Activated CD4-positive, alpha-beta memory T cell treated with anti-CD3 and anti-CD28 coated beads, Interleukin-2, amount 10 ng/mL, durations not matched to agents 7 days and 5 days (primary cell): ENCODE measurements at regions of chr12 and their contacts with region 1.

Region 1: GRCh38 chr12:56688129-56688845 is at the start of gene PTGES3:
- DNase-seq: peak; percentile 99
- H3K4me3 Mint-ChIP-seq: peak within 1 kb of the TSS; percentile 100
- H3K27ac Mint-ChIP-seq: peak within 1 kb of the TSS; percentile 100
- H3K4me1 Mint-ChIP-seq: peaks cover 22% of the 10 kb centered on the region
- H3K27me3 Mint-ChIP-seq: no peaks in the 10 kb centered on the region
- total RNA-seq, gene PTGES3: 240 to 241 TPM

Region 2: GRCh38 chr12:56630160-56630632 is 58.1 kb before region 1 on chr12 and contains the start of gene BAZ2A:
- CTCF ChIA-PET with region 1: interaction called, 65 read pairs
- POLR2A ChIA-PET with region 1: interaction called, 71 read pairs
- DNase-seq: peak; percentile 91
- H3K4me3 Mint-ChIP-seq: peak within 1 kb of the TSS; percentile 92
- H3K27ac Mint-ChIP-seq: peak within 1 kb of the TSS; percentile 86
- H3K4me1 Mint-ChIP-seq: peaks cover 69% of the 10 kb centered on the region
- H3K27me3 Mint-ChIP-seq: no peaks in the 10 kb centered on the region
- total RNA-seq, gene BAZ2A: 121 to 126 TPM

Region 3: DNA sequence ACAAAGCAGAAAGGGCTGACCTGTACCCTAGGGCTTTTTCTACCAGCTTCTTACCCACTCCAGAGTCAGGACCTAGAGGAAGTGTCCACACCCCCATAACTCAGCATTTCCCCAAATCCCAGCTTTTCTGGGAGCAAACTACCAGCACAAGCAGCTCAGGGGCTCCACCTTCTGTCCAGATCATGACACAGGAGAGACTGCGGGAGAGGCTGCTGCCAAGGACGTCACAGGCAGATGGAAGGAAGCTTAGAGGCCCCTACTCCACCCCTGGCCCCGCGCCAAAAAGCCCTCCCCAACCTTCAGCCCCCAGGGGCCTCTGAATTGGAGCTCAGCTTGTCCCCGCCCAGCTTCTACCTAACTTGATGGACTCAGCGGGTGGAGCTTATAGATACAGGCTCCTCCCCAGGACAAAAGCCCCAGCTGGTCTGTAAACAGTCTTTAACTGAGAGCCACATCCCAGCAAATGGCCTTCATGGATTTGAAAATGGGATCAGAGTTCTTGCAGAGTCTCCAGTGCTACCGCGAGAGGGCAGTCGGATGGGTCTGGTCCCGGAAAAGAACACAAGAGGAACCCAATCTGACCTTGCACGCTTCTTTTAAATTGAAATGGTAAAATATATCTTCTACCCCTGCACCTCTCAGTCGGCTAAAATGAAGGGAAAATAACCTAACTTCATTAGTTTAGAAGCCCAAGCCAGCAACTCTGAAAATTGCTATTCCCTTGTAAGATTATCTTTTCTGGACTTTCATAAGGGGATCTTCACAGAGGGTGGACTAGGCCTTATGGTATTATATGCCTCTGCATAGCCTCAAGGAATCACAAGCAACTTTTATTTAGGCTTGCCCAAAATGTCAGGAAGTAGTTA is 51.4 kb before region 1 on chr12:
- CTCF ChIA-PET with region 1: interaction called, 65 read pairs
- POLR2A ChIA-PET with region 1: interaction called, 65 read pairs
- DNase-seq: peak; percentile 92
- H3K4me3 Mint-ChIP-seq: peak overlapping the region; percentile 96
- H3K27ac Mint-ChIP-seq: peak overlapping the region; percentile 80
- H3K4me1 Mint-ChIP-seq: peaks cover 59% of the 10 kb centered on the region
- H3K27me3 Mint-ChIP-seq: no peaks in the 10 kb centered on the region

Region 4: GRCh38 chr12:56645717-56646446 is 42.4 kb before region 1 on chr12 and contains the start of gene ATP5F1B:
- CTCF ChIA-PET with region 1: interaction called, 4 read pairs
- POLR2A ChIA-PET with region 1: interaction called, 99 read pairs
- DNase-seq: peak; percentile 95
- H3K4me3 Mint-ChIP-seq: peak within 1 kb of the TSS; percentile 90
- H3K27ac Mint-ChIP-seq: peak within 1 kb of the TSS; percentile 95
- H3K4me1 Mint-ChIP-seq: peaks cover 35% of the 10 kb centered on the region
- H3K27me3 Mint-ChIP-seq: no peaks in the 10 kb centered on the region
- total RNA-seq, gene ATP5F1B: 529 to 549 TPM

Region 5: GRCh38 chr12:56677680-56678079 is 10.6 kb before region 1 on chr12:
- CTCF ChIA-PET with region 1: interaction called, 8 read pairs
- POLR2A ChIA-PET with region 1: interaction called, 23 read pairs
- DNase-seq: no peak
- H3K4me3 Mint-ChIP-seq: no peak overlapping the region
- H3K27ac Mint-ChIP-seq: peak overlapping the region; percentile 21
- H3K4me1 Mint-ChIP-seq: peaks cover 69% of the 10 kb centered on the region
- H3K27me3 Mint-ChIP-seq: no peaks in the 10 kb centered on the region

Region 6: DNA sequence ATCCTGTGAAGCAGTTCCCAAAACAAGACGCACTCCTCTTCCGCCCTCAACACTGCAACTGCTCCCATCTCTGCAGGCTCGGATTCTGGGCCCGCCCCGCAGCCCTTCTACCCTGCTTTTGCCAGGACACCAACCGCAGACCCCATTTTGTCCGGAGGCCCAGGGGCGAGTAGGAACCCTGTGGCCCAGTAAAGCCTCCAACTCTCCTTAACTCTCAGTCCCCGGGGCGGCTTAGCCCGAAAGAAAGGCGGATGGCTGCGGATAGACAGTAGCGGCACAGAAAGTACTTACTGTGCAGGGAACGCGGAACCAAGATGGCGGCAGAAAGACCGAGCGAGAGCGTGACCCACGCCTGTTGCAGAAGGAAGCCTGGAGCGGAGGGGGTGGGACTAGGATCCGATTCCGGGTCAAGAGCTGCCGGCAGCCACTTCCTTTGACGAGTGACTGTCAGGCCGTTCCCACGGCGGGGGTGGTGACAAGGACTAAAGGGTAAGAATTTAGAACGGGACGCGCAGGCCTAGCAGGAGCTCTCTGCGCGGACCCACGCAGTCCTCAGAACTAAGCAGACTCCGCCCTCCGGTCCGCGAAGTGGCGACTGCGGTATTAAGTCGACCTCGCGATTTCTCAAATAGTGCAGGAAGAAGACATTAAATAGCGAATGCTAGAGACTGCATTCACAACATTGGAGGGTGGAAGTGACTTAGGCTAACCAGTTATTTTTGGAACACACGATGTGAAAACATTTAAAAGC is 36.9 kb after region 1 on chr12 and contains the start of gene NACA:
- CTCF ChIA-PET with region 1: interaction called, 9 read pairs
- POLR2A ChIA-PET with region 1: interaction called, 155 read pairs
- DNase-seq: peak; percentile 99
- H3K4me3 Mint-ChIP-seq: peak within 1 kb of the TSS; percentile 94
- H3K27ac Mint-ChIP-seq: peak within 1 kb of the TSS; percentile 97
- H3K4me1 Mint-ChIP-seq: peaks cover 49% of the 10 kb centered on the region
- H3K27me3 Mint-ChIP-seq: no peaks in the 10 kb centered on the region
- total RNA-seq, gene NACA: 826 to 860 TPM

Region 7: GRCh38 chr12:56751712-56752598 is 63.7 kb after region 1 on chr12 and contains the start of gene PRIM1:
- CTCF ChIA-PET with region 1: interaction called, 3 read pairs
- POLR2A ChIA-PET with region 1: interaction called, 39 read pairs
- DNase-seq: peak; percentile 89
- H3K4me3 Mint-ChIP-seq: peak within 1 kb of the TSS; percentile 99
- H3K27ac Mint-ChIP-seq: peak within 1 kb of the TSS; percentile 97
- H3K4me1 Mint-ChIP-seq: peaks cover 50% of the 10 kb centered on the region
- H3K27me3 Mint-ChIP-seq: no peaks in the 10 kb centered on the region
- total RNA-seq, gene PRIM1: 45.0 to 46.2 TPM

Region 8: DNA sequence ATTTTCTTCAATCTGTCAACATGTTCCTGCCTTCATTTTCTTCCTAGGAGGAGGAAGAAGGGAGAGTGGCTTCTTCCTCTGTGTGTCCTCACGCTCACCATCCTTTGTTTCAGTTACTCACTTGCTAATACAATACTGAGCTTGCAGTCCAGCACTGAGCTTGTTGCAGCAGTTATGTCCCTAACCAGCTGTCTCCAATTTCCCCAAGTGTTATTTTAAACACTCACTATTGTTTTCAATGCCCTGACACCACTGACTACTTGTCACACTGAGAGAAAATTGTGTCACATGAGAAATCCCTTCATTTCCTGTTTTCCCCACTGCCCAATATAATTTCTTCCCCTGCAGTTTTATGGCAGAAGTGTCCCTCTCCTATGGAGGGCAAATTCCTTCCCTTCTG is 128.2 kb after region 1 on chr12:
- CTCF ChIA-PET with region 1: no interaction called
- POLR2A ChIA-PET with region 1: no interaction called
- DNase-seq: no peak
- H3K4me3 Mint-ChIP-seq: no peak overlapping the region
- H3K27ac Mint-ChIP-seq: no peak overlapping the region
- H3K4me1 Mint-ChIP-seq: no peaks in the 10 kb centered on the region
- H3K27me3 Mint-ChIP-seq: peaks cover 8% of the 10 kb centered on the region